A549 (cell line): ENCODE measurements at regions of chr9 and their contacts with region 1.

Region 1: DNA sequence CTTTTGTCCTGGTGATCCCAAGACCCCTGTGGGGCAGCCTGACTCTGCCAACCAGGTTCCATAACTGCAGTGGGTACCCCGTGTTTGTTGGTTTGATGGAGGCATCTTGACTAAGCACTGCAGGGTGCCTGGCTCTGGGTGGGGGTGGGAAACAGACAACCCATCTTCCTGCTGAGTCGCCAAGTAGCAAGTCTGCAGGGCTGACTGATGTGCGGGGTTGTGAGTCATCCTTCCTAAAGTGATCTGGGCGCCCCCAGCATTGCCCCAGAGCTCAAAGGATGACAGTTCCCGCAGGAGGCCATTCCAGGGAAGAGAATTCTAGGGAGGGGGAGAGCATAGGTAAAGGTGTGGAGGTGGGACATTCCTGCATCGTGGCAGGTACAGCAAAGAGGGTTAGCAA is 23.5 kb downstream of the DAB2IP start:
- DNase-seq: no peak
- ATAC-seq: peak in 1 of 2 experiments; percentile 41; a peak in 4 of 6 replicates
- H3K4me3 ChIP-seq: no peak overlapping the region
- H3K27ac ChIP-seq: peak overlapping the region in 1 of 2 experiments; percentile 53; a peak in 3 of 6 replicates
- H3K4me1 ChIP-seq: peaks cover 17% of the 10 kb centered on the region; the same call in 2 of the 3 replicates
- CTCF ChIP-seq: no peak
- EP300 ChIP-seq: no peak
- POLR2A ChIP-seq: no peak
- RAD21 ChIP-seq: no peak

Region 2: GRCh38 chr9:121698627-121699570 is 23.9 kb after region 1 on chr9:
- CTCF ChIA-PET with region 1: interaction called, 47 read pairs
- POLR2A ChIA-PET with region 1: no interaction called
- DNase-seq: no peak
- ATAC-seq: peak; percentile 13 to 61; a peak in 5 of 6 replicates
- H3K4me3 ChIP-seq: peak overlapping the region; percentile 55
- H3K27ac ChIP-seq: peak overlapping the region; percentile 66 to 94
- H3K4me1 ChIP-seq: peaks cover 8% of the 10 kb centered on the region; the same call in 1 of the 3 replicates
- CTCF ChIP-seq: no peak
- EP300 ChIP-seq: no peak
- POLR2A ChIP-seq: no peak
- RAD21 ChIP-seq: no peak

Region 3: DNA sequence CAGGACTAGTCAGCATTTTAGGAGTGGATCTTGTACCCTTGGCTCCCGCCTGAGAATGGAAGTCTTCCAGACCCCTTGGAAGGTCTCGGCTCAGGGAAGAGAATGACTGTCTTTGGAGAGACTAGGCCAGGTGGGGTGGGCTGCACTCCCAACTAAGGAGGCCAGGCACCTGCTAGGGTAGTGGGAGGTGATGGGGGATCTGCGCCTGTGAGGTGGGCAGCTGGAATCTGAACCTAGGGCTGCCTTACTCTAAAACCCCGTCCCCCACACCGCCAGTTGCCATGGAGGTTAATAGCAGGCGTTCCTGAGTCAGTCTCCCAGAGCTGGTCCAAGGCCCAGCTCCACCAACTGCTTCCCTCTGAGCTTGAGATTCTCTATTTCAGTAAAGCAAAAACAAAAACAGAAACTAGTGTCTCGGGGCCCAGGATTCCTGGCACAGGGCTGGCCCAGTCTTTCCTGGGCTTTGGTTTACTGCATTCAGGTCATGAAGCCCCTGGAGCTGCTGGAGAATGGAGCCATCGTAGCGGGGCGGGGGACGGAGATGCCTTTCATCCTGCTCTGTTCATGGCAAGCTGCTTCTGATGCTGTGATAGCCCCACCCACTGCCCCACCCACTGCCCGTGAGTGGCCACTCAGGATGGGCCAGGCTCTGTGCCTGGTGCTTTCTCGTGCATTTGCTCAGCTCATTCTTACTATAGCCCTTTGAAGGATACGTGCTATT is 34.0 kb after region 1 on chr9:
- CTCF ChIA-PET with region 1: no interaction called
- POLR2A ChIA-PET with region 1: no interaction called
- DNase-seq: no peak
- ATAC-seq: peak in 1 of 2 experiments; percentile 78; a peak in 3 of 6 replicates
- H3K4me3 ChIP-seq: no peak overlapping the region
- H3K27ac ChIP-seq: no peak overlapping the region
- H3K4me1 ChIP-seq: no peaks in the 10 kb centered on the region
- CTCF ChIP-seq: no peak
- EP300 ChIP-seq: no peak
- POLR2A ChIP-seq: no peak
- RAD21 ChIP-seq: no peak

Region 4: DNA sequence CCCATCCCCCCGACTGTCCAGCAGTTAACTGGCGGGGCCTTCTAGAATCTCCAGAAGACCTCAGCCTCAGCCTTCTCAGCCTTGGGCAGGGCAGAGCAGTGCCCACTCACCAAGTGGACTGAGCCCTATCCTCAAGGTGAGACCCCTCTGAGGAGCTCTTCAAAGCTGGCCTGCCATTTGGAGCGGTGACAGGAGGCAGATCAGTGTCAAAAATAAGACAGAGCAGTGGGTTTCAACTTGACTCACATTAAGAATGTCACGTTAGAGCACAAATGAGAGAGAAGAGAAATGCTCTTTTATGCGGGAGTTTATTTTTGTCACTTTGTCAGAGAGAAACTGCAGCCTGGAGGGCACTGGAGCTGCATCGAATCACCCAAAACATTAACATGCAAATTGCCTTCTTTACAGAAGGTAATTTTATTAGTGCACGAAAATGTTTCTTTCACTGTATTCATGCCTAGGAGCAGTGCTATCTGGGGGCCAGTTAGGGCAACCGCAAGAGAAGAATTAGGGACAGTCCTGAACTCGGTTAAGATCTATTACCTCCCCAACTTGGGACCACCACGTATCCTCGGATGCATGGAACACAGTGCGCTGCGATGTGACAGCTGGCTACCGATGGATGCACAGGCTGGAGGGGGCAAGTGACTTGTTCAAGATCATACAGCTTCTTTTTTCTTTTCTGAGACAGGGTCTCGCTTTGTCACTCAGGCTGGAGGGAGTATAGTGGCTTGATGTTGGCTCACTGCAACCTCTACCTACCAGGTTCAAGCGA is 165.0 kb after region 1 on chr9:
- CTCF ChIA-PET with region 1: no interaction called
- POLR2A ChIA-PET with region 1: no interaction called
- DNase-seq: no peak
- ATAC-seq: no peak
- H3K4me3 ChIP-seq: no peak overlapping the region
- H3K27ac ChIP-seq: no peak overlapping the region
- H3K4me1 ChIP-seq: peaks cover 13% of the 10 kb centered on the region; the same call in 2 of the 3 replicates
- CTCF ChIP-seq: no peak
- EP300 ChIP-seq: no peak
- POLR2A ChIP-seq: no peak
- RAD21 ChIP-seq: no peak